ENCODE measurements at regions of chr12 and their contacts with region 1.

Region 1: DNA sequence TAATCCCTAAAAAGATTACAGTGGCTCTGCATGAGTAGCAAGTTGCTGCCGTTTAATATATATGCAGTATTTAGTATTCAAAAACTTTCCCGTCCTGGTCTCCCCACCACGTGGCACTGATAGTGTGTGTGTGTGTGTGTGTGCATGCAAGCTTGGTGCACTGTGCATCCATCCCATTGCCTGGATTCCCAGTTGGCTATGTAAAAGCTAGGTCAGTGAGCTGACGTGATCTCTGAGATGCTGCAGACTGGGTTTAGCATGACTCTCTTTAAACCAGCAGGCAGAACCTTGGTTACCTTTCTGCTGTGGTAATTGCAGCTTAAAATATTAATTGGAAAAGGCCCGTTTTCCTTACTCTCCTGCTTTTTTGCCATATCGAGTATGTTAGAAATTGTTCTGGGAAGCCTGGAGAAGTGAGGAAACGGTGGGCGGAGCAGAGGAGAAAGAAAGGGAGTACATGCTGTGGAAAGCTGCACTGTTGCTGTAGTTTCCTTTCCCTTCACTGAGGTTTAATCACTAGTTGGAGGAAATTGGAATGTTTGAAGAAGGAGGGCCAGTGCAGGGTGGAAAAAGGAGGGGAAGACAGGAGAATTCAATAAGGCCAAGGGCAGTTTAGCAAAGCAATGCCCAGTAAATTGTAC is 4.0 kb upstream of the CNTN1 start:
- DNase-seq: no peak
- H3K4me3 ChIP-seq: no peak overlapping the region
- H3K27ac ChIP-seq: no peak overlapping the region
- H3K4me1 ChIP-seq: no peaks in the 10 kb centered on the region
- H3K27me3 ChIP-seq: peaks cover 0 to 10% of the 10 kb centered on the region in 2 donors
- CTCF ChIP-seq: no peak
- POLR2A ChIP-seq: no peak

Region 2: GRCh38 chr12:40749863-40750262 is 61.7 kb after region 1 on chr12:
- intact Hi-C with region 1: loop called (anchors 2 kb)
- DNase-seq: no peak
- H3K4me3 ChIP-seq: no peak overlapping the region
- H3K27ac ChIP-seq: no peak overlapping the region
- H3K4me1 ChIP-seq: no peaks in the 10 kb centered on the region
- H3K27me3 ChIP-seq: no peaks in the 10 kb centered on the region
- CTCF ChIP-seq: no peak
- POLR2A ChIP-seq: no peak

Region 3: GRCh38 chr12:42450248-42450647 is 1762.0 kb after region 1 on chr12:
- intact Hi-C with region 1: loop called (anchors 10 kb)
- DNase-seq: no peak
- H3K4me3 ChIP-seq: no peak overlapping the region
- H3K27ac ChIP-seq: no peak overlapping the region
- H3K4me1 ChIP-seq: no peaks in the 10 kb centered on the region
- H3K27me3 ChIP-seq: no peaks in the 10 kb centered on the region
- CTCF ChIP-seq: no peak
- POLR2A ChIP-seq: no peak

Measured in breast epithelium (tissue), 4 donors.